Caco-2 (cell line): ENCODE measurements at regions of chr5 and their contacts with region 1.

Region 1: DNA sequence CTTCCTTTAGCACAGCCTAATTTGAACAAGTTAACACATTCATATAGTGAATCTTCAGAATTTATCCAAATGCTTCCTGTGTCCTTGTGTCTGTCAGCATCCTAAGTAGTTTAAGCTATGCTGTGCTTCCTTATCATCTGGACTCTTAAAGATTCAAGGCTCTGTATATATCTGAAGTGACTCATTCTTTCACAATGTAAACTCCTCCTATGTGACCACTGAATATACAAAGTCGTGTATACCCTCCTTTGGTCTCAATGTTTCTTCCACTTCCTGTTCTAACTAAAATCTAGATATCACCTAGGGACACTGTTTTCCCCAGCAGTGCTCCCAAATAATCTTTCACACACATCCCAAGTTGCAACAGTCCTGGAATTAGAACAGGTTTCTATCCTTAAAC is 935.7 kb upstream of the NUDT12 start:
- DNase-seq: peak in 1 of 2 experiments; percentile 13
- H3K4me3 ChIP-seq: no peak overlapping the region
- H3K4me3 Mint-ChIP-seq: no peak overlapping the region
- H3K27ac Mint-ChIP-seq: peak overlapping the region; percentile 56
- H3K4me1 ChIP-seq: peaks cover 11% of the 10 kb centered on the region
- H3K4me1 Mint-ChIP-seq: peaks cover 13% of the 10 kb centered on the region
- H3K27me3 ChIP-seq: no peaks in the 10 kb centered on the region
- H3K27me3 Mint-ChIP-seq: no peaks in the 10 kb centered on the region
- CTCF ChIP-seq: no peak

Region 2: DNA sequence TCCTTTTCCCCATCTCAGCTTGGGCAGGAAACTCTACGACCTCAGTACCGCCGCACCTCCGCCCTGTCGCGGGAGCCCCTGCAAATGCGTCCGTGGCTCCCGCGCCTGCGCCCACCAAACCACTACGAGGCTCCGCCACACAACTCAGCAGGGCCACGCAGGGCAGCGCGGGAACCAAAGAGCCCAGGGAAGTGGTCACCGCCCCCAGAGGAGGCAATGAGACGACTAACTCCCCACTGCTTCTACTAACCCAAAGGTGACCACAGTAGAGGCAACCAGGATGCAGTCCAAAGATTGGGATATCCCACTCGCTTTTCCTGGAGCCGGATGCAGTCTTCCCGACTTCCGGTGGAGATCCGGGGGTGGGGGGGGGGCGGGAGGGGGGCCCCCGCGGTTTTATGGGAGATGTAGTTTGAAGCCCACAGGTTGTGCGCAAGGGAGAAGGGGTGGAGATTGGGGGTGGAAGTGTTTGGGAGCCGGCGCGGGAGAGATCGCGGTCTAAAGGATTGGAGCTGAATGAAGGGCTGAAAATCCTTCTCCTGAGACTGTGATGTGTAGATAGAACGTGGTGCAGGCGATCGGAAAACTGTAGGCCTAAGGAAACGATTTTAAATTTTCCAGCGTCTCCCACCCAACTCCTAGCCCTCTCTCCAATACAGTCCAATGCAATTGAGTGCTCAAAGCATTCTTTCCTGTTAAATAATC is 935.7 kb before region 1 on chr5 and contains the start of gene NUDT12:
- CTCF ChIA-PET with region 1: no interaction called
- POLR2A ChIA-PET with region 1: no interaction called
- intact Hi-C with region 1: no loop called
- DNase-seq: peak; percentile 70 to 78
- H3K4me3 ChIP-seq: peak within 1 kb of the TSS; percentile 69
- H3K4me3 Mint-ChIP-seq: peak within 1 kb of the TSS; percentile 91
- H3K27ac Mint-ChIP-seq: peak within 1 kb of the TSS; percentile 79
- H3K4me1 ChIP-seq: peaks cover 4% of the 10 kb centered on the region; the same call in 1 of the 2 replicates
- H3K4me1 Mint-ChIP-seq: peaks cover 7% of the 10 kb centered on the region
- H3K27me3 ChIP-seq: no peaks in the 10 kb centered on the region
- H3K27me3 Mint-ChIP-seq: no peaks in the 10 kb centered on the region
- CTCF ChIP-seq: no peak
- total RNA-seq, gene NUDT12: 12.3 and 12.9 TPM in 2 replicates

Region 3: DNA sequence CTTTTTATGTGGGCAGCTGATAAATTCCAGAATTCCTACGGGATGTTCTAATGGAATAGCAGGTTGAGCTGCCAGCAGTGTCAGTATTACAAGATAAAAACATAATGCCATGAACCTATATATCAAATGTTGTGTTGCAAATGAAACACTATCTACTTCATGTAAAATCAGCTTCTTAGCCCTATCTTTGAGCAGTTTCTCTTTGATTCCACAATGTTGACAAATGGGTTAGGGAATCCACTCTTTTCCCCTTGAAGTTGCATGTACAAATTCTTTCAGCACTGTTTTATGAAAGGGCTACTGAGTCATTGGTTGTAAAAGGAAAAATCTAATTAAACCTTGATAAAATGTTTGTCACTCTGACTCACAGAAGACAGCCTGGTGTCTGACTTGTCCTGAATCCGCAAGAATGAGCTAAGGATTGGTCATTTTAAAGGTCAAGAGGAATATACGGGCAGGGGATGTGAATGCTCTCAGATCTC is 14.9 kb after region 1 on chr5:
- CTCF ChIA-PET with region 1: no interaction called
- POLR2A ChIA-PET with region 1: no interaction called
- intact Hi-C with region 1: loop called (anchors 1 kb)
- DNase-seq: peak; percentile 27 to 40
- H3K4me3 ChIP-seq: no peak overlapping the region
- H3K4me3 Mint-ChIP-seq: no peak overlapping the region
- H3K27ac Mint-ChIP-seq: peak overlapping the region; percentile 79
- H3K4me1 ChIP-seq: peaks cover 28% of the 10 kb centered on the region
- H3K4me1 Mint-ChIP-seq: peaks cover 11% of the 10 kb centered on the region
- H3K27me3 ChIP-seq: no peaks in the 10 kb centered on the region
- H3K27me3 Mint-ChIP-seq: no peaks in the 10 kb centered on the region
- CTCF ChIP-seq: no peak